A549 (cell line): ENCODE measurements at regions of chr14 and their contacts with region 1.

Region 1: DNA sequence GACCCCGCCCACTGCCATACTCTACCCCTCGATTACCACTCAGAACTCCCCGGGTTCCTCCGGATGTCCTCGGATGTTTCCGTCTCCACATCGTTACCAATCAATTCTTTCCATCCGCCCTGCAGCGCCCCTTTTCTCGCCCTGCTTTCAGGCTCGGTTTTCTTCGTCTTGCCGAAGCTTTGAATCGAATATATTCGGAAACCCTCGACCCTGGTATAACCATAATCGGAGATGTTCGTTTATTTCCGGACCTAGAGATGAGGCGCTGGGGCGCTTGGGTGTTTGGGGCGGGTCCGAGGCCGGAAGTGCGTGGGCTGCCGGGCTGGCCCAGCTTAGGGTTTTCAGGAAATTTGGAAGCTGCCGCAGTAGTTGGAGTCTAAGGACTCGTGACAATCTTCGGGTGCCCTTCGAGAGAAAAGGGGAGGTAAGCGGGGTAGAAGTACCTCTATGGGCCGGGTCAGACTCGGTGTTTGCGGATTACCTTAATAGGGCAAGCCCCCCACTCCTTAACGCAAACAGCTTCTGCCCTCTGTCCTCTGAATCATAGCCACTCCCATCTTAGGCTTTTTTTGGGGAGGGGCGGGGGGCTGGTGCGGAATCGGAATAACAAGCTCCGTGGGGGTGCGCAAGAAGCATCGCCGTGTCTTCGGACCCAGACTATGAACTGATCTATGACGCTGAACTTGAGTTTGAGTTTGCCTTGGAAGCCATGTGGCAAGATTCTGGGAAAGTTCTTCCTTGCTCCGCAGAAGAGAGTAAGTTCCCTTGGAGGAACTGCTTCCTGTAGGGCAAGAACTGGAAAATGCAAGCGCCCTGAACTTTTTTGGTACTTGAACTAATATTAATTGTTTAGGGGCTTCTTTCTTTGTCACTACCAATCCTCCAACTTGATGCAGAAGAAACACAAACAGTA is at the start of gene C14orf119:
- DNase-seq: peak; percentile 98
- ATAC-seq: peak; percentile 90 to 93
- H3K4me3 ChIP-seq: peak within 1 kb of the TSS; percentile 62
- H3K27ac ChIP-seq: peak within 1 kb of the TSS; percentile 89 to 97
- H3K4me1 ChIP-seq: peaks cover 23% of the 10 kb centered on the region
- CTCF ChIP-seq: no peak
- EP300 ChIP-seq: no peak
- POLR2A ChIP-seq: peak; percentile 81
- RAD21 ChIP-seq: no peak
- polyA plus RNA-seq, gene C14orf119: 82.5 and 107 TPM in 2 replicates

Region 2: DNA sequence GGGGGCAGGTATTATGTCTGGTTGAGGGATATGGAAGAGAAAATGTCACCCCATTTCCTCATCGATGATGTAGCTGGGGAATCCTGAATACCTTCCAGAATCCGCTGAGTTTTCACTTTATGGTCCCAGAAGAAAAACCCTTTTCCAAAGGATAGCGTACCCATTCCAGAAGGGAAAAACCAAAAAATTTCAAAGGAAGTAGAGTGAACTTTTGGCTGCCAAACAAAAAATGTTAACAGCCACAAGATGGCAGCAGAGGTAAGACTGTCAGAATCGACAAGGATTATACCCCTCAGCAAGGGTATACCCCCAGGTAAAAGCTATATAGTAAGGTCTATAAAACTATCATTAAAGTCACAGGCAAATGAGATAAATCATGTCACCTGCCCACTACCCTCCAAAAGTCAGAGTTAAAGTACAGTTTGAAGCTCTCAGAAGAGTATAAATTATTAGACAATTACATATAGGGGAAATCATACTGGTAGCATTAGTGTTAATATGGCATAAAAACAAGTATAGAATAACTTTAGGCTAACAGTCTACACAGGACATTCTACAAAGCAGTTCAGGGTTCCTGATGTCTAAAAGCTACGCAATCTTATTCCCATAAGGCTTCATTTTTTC is 18.6 kb before region 1 on chr14:
- CTCF ChIA-PET with region 1: interaction called, 78 read pairs
- POLR2A ChIA-PET with region 1: interaction called, 36 read pairs
- DNase-seq: peak in 1 of 2 experiments; percentile 33
- ATAC-seq: peak; percentile 51 to 55; a peak in 3 of 6 replicates
- H3K4me3 ChIP-seq: no peak overlapping the region
- H3K27ac ChIP-seq: no peak overlapping the region; a peak in 1 of 6 replicates
- H3K4me1 ChIP-seq: peaks cover 49% of the 10 kb centered on the region
- CTCF ChIP-seq: peak; percentile 80
- EP300 ChIP-seq: no peak
- POLR2A ChIP-seq: no peak
- RAD21 ChIP-seq: peak; percentile 48 to 56; a peak in 4 of 5 replicates

Region 3: DNA sequence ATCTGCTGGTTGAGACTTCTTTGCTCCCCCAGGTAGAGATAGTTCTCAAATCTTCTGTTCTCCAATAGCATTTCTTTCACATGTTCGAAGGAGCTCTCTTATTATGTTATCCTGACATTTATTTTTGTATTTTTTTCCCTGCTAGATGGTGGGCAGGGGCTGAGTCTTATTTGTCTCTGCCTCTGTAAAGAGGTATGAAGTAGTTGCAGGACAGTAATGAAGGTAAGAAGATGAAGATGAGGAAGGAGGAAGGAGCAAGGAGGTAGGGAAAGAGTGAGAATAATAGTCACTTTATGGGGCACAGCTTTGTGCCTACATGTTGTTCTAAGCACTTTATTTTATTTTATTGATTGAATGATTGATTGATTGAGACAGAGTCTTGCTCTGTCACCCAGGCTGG is 14.3 kb after region 1 on chr14:
- CTCF ChIA-PET with region 1: interaction called, 51 read pairs
- POLR2A ChIA-PET with region 1: interaction called, 10 read pairs
- DNase-seq: no peak
- ATAC-seq: no peak
- H3K4me3 ChIP-seq: no peak overlapping the region
- H3K27ac ChIP-seq: no peak overlapping the region
- H3K4me1 ChIP-seq: peaks cover 14% of the 10 kb centered on the region
- CTCF ChIP-seq: no peak
- EP300 ChIP-seq: no peak
- POLR2A ChIP-seq: no peak
- RAD21 ChIP-seq: no peak

Region 4: DNA sequence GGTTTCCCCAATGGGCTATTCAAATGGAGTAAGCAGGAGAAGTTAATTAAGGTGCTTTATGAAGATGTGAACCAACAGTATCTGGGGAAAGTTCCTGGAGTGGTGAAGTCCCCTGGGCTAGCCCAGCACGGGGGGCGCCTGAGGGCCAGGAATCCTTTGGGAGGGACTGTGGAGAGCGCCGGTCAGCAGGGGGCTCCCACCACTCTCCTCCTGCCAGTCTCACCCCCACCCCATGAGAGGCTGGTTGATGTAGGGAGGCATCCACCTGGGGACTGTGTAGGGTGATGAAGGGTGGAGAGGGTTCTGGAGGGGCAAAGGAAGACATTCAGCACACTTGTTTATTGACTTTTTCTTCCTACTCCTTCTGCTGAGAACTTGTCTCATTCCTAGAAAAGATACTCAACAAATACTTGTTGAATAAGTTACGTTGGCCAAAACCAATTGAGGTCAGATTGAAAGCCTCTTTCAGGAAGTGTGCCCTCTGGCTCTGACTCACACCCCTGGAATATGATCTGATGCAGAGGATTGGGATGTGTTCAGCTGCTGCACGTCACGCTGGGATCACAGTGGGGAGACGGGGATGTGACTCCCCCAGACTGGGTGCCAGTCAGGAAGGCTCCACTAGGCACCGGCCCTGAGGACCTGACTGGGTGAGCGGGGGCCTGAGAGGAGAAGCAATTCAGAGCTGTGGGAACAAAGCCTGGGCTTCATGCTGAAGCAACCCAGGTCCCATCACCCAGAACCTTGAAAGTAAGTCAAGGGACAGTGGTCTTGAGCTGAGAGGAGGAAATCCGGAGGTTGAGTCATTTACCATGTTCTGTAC is 19.4 kb after region 1 on chr14:
- CTCF ChIA-PET with region 1: interaction called, 51 read pairs
- POLR2A ChIA-PET with region 1: interaction called, 7 read pairs
- DNase-seq: peak; percentile 79 to 80
- ATAC-seq: peak; percentile 80 to 88
- H3K4me3 ChIP-seq: no peak overlapping the region
- H3K27ac ChIP-seq: peak overlapping the region; percentile 47 to 75; a peak in 5 of 6 replicates
- H3K4me1 ChIP-seq: peaks cover 22% of the 10 kb centered on the region
- CTCF ChIP-seq: no peak
- EP300 ChIP-seq: no peak
- POLR2A ChIP-seq: no peak
- RAD21 ChIP-seq: no peak

Region 5: GRCh38 chr14:23301288-23301968 is 206.0 kb after region 1 on chr14:
- CTCF ChIA-PET with region 1: interaction called, 3 read pairs
- POLR2A ChIA-PET with region 1: interaction called, 11 read pairs
- DNase-seq: peak; percentile 96 to 97
- ATAC-seq: peak; percentile 82 to 89
- H3K4me3 ChIP-seq: peak overlapping the region; percentile 63
- H3K27ac ChIP-seq: peak overlapping the region; percentile 92
- H3K4me1 ChIP-seq: peaks cover 23% of the 10 kb centered on the region
- CTCF ChIP-seq: peak; percentile 92
- EP300 ChIP-seq: no peak
- POLR2A ChIP-seq: peak; percentile 45
- RAD21 ChIP-seq: no peak; a peak in 2 of 5 replicates